K562 (cell line): ENCODE measurements at regions of chr7 and their contacts with region 1.

Region 1: DNA sequence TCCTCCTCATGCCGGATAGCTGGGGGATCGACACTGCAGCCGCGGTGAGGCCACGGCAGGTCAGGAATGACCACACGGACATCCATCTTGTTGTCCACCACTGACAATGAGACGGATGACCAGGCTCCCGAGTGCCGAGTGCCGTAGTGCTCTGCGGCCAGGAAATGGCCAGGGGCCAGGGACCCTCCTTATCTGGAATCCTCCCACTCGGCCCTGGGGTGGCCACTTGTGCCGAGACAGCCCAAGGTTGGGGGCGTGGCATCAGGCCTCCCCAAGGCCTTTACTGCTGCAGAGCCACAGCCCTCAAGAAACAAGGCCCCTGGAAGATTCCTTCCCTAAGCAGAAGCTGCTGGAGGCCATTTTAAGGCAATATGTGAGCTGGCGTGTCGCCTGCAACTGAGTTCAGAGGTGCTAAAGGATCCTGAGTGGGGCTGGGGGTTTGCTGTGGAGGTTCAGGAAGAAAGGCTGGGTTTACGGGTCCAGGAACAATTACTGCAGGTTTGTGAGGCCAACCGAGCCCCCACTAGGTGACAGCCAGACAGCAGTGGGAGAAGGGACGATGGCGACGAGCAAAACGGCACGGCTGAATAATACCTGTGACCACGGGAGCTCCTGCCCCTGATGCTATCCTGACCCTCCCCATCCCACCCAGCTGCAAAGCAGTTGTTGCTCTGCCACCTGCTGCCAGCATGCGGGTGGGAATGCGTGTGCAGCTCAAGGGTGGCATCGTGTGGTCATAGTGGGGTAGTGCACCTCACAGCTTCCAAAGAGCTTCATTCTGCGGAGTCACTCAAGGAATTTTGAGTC is 31.6 kb upstream of the LEP start:
- DNase-seq: peak; percentile 89 to 93 (median 92)
- ATAC-seq: peak; percentile 84
- H3K4me3 ChIP-seq: no peak overlapping the region
- H3K27ac ChIP-seq: no peak overlapping the region
- H3K4me1 ChIP-seq: peaks cover 6 to 18% of the 10 kb centered on the region in 2 experiments; a peak in 3 of 5 replicates
- H3K27me3 ChIP-seq: peaks cover 22 to 57% of the 10 kb centered on the region in 2 experiments; a peak in 4 of 5 replicates
- CTCF ChIP-seq: peak; percentile 100
- EP300 ChIP-seq: no peak
- POLR2A ChIP-seq: no peak
- RAD21 ChIP-seq: peak; percentile 99 to 100

Region 2: GRCh38 chr7:127347567-127348246 is 861.7 kb before region 1 on chr7:
- CTCF ChIA-PET with region 1: interaction called, 3 read pairs
- POLR2A ChIA-PET with region 1: no interaction called
- in situ Hi-C with region 1: no loop called
- intact Hi-C with region 1: loop called (anchors 10 kb)
- DNase-seq: peak; percentile 75 to 88 (median 79)
- ATAC-seq: peak; percentile 99
- H3K4me3 ChIP-seq: peak overlapping the region; percentile 29
- H3K27ac ChIP-seq: no peak overlapping the region
- H3K4me1 ChIP-seq: peaks cover 0 to 8% of the 10 kb centered on the region in 2 experiments; a peak in 3 of 5 replicates
- H3K27me3 ChIP-seq: no peaks in the 10 kb centered on the region
- CTCF ChIP-seq: peak; percentile 61 to 98 (median 94)
- EP300 ChIP-seq: no peak
- POLR2A ChIP-seq: no peak
- RAD21 ChIP-seq: peak; percentile 72 to 83

Region 3: DNA sequence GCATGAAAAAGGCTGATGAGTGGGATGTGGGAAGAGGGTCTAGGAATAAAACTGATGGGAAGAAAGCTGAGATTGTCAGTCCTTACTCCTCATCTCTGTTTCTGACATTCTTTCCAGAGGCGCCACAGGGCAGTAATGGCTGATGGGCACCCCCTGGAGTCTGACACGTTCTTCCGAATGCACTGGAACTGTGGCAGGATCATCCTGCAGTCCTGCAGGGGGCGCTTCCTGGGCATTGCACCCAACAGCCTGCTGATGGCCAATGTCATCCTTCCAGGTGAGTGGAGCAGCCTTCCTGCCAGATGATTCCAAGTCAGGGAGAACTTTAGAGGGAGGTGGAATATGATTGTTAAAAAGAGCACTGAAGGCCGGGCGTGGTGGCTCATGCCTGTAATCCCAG is 611.1 kb before region 1 on chr7:
- CTCF ChIA-PET with region 1: no interaction called
- POLR2A ChIA-PET with region 1: no interaction called
- in situ Hi-C with region 1: no loop called
- intact Hi-C with region 1: loop called (anchors 5 kb)
- DNase-seq: peak; percentile 58 to 68 (median 63)
- ATAC-seq: peak; percentile 85
- H3K4me3 ChIP-seq: no peak overlapping the region
- H3K27ac ChIP-seq: no peak overlapping the region
- H3K4me1 ChIP-seq: no peaks in the 10 kb centered on the region; a peak in 1 of 5 replicates
- H3K27me3 ChIP-seq: peaks cover 47 to 75% of the 10 kb centered on the region in 2 experiments
- CTCF ChIP-seq: peak; percentile 75 to 98 (median 93)
- EP300 ChIP-seq: no peak
- POLR2A ChIP-seq: no peak
- RAD21 ChIP-seq: peak in 1 of 2 experiments; percentile 59; a peak in 2 of 4 replicates

Region 4: DNA sequence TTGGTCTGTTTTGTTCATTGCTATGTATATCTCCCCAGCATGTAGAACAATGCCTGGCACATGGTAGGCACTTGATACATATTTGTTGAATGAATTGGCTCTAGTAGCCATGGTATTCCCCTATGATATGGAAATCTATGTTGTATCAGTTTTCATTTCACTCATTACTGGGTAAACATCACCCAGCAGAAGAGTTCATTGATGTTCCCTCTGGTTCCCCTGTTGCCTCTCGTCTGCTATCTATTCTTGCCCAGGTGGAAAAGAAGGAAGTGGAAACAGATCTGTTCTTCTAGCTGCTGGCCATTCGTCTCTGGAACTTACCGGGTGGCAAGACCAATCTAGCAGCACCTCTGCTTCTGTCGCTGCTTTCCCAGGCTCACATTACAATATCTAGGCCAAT is 249.7 kb before region 1 on chr7:
- CTCF ChIA-PET with region 1: interaction called, 4 read pairs
- POLR2A ChIA-PET with region 1: no interaction called
- in situ Hi-C with region 1: no loop called
- intact Hi-C with region 1: loop called (anchors 10 kb)
- DNase-seq: no peak
- ATAC-seq: no peak
- H3K4me3 ChIP-seq: no peak overlapping the region
- H3K27ac ChIP-seq: no peak overlapping the region
- H3K4me1 ChIP-seq: no peaks in the 10 kb centered on the region
- H3K27me3 ChIP-seq: no peaks in the 10 kb centered on the region
- CTCF ChIP-seq: no peak
- EP300 ChIP-seq: no peak
- POLR2A ChIP-seq: no peak
- RAD21 ChIP-seq: no peak

Region 5: DNA sequence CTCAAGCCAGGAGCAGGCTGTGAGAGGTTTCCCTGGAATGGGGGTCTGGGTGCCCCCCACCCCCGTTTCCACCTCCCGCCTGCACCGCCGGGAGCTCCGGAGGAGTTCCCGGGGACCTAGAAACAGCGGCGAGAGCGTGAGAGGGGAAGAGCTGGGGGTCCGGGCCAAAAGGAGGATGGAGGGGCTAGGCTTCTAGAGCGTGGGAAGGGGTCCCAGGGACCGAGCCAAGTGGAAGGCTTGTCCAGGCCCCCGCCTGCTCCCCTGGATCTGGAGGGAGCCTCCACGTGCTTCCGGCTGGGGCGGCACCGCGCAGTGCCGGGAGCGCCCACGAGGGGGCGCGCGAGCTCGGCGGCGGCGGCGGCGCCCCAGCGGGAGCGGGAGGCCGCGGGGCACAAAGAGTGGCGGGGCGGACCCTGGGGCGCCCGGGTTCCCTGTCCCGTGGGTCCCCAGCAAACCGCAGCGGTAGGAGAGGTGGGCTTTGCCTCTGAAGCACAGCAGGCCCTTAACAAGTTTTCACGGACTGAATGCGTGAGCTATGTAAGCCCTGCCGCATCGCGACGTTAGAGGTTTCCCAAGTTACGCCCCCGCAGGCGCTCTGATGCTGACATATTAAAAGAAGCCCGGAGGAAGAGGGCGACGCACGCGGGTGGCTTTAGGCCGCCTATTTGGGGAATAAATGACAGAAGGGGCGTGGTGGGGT is 73.8 kb before region 1 on chr7:
- CTCF ChIA-PET with region 1: interaction called, 53 read pairs
- POLR2A ChIA-PET with region 1: interaction called, 7 read pairs
- in situ Hi-C with region 1: no loop called
- intact Hi-C with region 1: loop called (anchors 1 kb)
- DNase-seq: peak; percentile 81 to 98 (median 96)
- ATAC-seq: peak; percentile 96
- H3K4me3 ChIP-seq: peak overlapping the region; percentile 53
- H3K27ac ChIP-seq: no peak overlapping the region
- H3K4me1 ChIP-seq: peaks cover 16% of the 10 kb centered on the region in 2 experiments
- H3K27me3 ChIP-seq: peaks cover 25 to 39% of the 10 kb centered on the region in 2 experiments
- CTCF ChIP-seq: peak; percentile 87 to 94 (median 88)
- EP300 ChIP-seq: no peak
- POLR2A ChIP-seq: no peak
- RAD21 ChIP-seq: peak; percentile 77 to 90